ENCODE measurements at regions of chr10 and their contacts with region 1.

Region 1: GRCh38 chr10:114304017-114304570 is 65.0 kb downstream of the VWA2 start:
- DNase-seq: peak; percentile 91
- H3K4me3 ChIP-seq: peak overlapping the region; percentile 74
- H3K27ac ChIP-seq: peak overlapping the region; percentile 55
- H3K4me1 ChIP-seq: peaks cover 5% of the 10 kb centered on the region
- CTCF ChIP-seq: peak; percentile 90

Region 2: GRCh38 chr10:114195079-114195478 is 109.0 kb before region 1 on chr10:
- CTCF ChIA-PET with region 1: no interaction called
- POLR2A ChIA-PET with region 1: no interaction called
- intact Hi-C with region 1: no loop called
- DNase-seq: no peak
- H3K4me3 ChIP-seq: no peak overlapping the region
- H3K27ac ChIP-seq: no peak overlapping the region
- H3K4me1 ChIP-seq: no peaks in the 10 kb centered on the region
- CTCF ChIP-seq: no peak

Region 3: DNA sequence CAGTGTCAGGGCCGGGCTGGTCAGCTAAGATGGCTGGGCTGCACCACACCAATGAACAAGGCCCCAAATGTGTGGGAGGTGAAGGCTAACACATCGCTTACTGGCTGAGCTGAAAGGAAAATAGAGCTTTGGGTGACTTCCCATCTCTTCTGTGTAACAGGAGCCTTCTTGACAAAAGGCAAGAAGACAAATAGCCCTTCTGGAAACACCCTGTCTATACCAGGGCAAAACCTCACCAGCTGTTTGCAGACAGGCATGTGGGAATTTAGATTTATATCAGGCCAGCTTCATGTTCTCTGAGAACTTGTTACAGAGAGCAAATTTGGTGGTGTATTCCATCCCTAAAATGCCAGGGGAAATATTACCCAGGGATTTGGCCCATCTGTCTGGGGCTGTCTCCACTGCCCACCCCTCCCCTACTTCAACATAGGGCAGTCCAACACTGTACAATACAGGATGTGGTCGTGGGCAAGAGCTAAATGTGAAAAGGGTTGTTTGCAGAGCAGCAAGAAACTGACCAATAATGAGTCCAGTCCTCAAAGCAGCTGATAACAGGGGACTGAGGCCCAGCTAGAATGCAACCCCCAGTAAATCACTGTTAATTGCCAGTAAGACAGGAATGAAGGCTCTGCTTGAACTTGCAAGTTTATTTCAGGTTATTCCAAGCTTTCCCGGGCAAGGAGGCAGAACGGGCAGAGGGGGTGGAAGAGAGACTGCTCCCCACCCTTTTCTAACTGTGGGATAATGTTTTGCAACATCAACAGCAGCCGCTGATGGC is 63.1 kb after region 1 on chr10:
- CTCF ChIA-PET with region 1: no interaction called
- POLR2A ChIA-PET with region 1: no interaction called
- intact Hi-C with region 1: no loop called
- DNase-seq: no peak
- H3K4me3 ChIP-seq: no peak overlapping the region
- H3K27ac ChIP-seq: no peak overlapping the region
- H3K4me1 ChIP-seq: no peaks in the 10 kb centered on the region
- CTCF ChIP-seq: no peak

Region 4: DNA sequence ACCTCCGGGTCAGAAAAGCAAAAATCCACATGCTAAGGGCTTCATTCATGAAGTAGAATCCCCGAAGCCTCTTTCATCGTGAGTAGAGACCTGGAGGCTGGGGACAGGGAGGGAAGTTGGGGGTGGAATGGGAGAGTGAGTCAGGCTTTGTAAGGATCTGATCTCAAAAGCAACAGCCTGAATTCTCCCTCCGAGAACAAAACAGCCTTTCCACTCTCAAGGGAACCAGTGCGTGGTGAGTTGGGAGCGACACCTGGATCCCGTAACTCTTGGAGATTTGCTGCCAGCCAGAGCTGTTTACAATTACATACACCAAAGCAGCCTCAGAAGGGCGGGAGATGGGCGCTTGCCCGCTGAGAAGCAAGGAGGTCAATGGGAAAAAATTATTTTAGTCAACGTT is 89.4 kb after region 1 on chr10:
- CTCF ChIA-PET with region 1: no interaction called
- POLR2A ChIA-PET with region 1: no interaction called
- intact Hi-C with region 1: loop called (anchors 5 kb)
- DNase-seq: no peak
- H3K4me3 ChIP-seq: no peak overlapping the region
- H3K27ac ChIP-seq: no peak overlapping the region
- H3K4me1 ChIP-seq: no peaks in the 10 kb centered on the region
- CTCF ChIP-seq: no peak

Region 5: DNA sequence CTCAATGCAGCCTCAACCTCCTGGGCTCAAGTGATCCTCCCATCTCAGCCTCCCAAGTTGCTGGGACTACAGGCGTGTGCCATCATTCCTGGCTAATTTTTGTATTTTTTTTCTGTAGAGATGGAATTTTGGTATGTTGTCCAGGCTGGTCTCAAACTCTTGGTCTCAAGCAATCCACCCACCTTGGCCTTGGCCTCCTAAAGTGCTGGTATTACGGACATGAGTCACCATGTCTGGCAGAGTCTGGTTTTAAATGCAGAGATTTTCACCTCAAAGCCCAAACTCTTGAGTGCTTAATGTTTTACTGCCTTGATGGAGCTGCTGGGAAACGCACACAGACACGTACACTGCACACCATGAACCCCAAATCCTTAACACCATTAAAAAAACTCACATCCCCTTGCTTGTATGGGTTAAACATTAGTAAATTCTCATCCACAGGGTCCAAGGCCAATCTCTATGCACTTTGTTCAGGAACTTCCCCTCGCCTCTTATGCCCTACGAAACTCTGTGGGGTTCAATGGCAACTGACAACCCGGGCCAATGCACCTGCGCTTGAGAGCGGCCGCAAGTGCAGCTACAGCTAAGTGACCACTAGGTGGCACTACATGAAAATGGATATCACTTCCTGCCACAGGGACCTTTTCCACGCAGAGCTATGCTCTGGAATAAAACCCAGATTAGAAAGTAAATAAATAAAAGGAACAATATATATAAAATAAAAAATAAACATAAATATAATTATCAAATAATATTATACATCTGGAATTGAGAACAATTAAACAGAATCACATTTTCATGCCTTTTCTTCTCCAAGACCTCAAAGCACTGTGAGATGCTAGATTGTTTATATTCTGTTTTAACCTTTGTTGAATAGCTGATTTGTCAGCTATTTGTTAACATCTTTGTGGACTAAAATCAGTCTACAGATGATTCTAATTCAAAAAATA is 167.1 kb after region 1 on chr10:
- CTCF ChIA-PET with region 1: interaction called, 3 read pairs
- POLR2A ChIA-PET with region 1: interaction called, 10 read pairs
- intact Hi-C with region 1: loop called (anchors 1 kb)
- DNase-seq: peak; percentile 87
- H3K4me3 ChIP-seq: no peak overlapping the region
- H3K27ac ChIP-seq: peak overlapping the region; percentile 39
- H3K4me1 ChIP-seq: peaks cover 27% of the 10 kb centered on the region
- CTCF ChIP-seq: peak; percentile 92

Region 6: DNA sequence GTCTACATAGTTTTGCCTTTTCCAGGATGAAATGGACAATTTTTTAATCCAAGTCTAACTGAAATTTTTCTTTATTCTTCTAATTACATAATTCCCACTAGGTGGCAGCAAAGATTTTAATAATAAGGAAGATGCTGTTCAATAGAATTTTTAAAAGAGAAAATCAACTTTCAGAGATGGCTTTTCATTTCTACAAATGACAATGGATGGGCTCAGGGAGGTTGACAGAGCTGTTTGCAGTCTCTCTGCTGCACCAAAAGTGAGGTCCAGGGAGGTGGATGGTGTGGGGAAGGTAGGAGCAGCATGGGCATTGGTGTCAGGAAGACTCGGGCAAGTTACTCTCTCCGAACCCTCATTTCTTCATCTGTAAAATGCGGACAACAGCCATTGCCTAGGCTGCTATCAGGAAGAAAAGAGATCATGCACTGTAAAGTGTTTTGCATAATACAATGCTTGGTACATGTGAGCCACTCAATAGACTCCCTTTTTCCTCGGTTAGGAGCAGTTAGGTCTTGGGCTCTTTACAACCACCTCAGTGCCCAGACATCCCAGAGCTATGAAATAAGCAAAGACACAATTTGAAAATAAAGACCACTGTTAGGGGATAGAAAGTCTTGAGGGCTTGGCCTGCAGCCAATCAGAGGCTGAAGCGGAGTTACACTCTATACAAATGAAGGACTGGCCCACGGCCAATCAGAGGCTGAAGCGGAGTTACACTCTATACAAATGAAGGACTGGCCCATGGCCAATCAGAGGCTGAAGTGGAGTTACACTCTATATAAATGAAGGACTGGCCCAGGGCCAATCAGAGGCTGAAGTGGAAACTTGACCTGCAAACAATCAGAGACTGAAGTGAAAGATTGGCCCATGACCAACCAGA is 246.9 kb after region 1 on chr10:
- CTCF ChIA-PET with region 1: interaction called, 6 read pairs
- POLR2A ChIA-PET with region 1: interaction called, 3 read pairs
- intact Hi-C with region 1: loop called (anchors 1 kb)
- DNase-seq: peak; percentile 67
- H3K4me3 ChIP-seq: no peak overlapping the region
- H3K27ac ChIP-seq: no peak overlapping the region
- H3K4me1 ChIP-seq: peaks cover 16% of the 10 kb centered on the region
- CTCF ChIP-seq: peak; percentile 93

Region 7: DNA sequence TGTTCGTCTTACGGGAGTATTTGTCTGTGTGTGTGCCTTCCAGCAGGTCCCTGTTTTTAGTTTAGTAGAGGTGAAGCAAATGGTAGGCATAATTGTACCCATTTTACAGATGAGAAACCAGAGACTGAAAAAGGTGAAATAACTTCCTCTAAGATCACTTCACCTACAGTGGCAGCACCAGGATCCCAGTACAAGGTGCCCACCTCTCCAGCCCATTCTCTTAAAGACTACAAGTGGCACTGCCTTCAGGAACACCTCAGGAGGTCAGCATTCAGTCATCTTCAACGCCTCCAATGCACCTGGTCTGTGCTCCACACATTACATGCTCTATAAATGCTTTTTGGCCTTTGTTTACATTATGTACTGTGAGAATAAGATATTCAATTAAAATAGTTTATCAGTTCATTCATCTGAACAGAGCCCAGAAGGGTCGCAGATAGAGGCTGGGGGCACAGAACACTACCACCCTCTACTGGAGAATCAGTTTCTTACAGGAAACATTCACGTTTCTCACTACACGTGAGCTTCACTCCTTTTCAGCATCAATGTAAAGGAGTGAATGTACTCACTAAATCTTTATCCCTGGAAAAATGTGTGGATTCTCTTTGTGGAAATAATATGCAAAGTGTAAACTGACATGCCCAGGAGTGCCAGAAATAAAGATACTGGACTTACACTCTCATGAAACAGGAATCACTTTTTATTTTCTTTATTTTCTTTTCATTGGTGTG is 399.4 kb after region 1 on chr10:
- CTCF ChIA-PET with region 1: interaction called, 5 read pairs
- POLR2A ChIA-PET with region 1: no interaction called
- intact Hi-C with region 1: loop called (anchors 1 kb)
- DNase-seq: peak; percentile 48
- H3K4me3 ChIP-seq: no peak overlapping the region
- H3K27ac ChIP-seq: no peak overlapping the region
- H3K4me1 ChIP-seq: no peaks in the 10 kb centered on the region
- CTCF ChIP-seq: peak; percentile 91

Region 8: GRCh38 chr10:115129752-115130151 is 825.7 kb after region 1 on chr10:
- CTCF ChIA-PET with region 1: no interaction called
- POLR2A ChIA-PET with region 1: no interaction called
- intact Hi-C with region 1: loop called (anchors 10 kb)
- DNase-seq: peak; percentile 45
- H3K4me3 ChIP-seq: no peak overlapping the region
- H3K27ac ChIP-seq: no peak overlapping the region
- H3K4me1 ChIP-seq: no peaks in the 10 kb centered on the region
- CTCF ChIP-seq: peak; percentile 80